ENCODE measurements at regions of chr5 and their contacts with region 1.

Region 1: GRCh38 chr5:119478781-119479180 is 26.5 kb downstream of the HSD17B4 start:
- DNase-seq: no peak
- H3K4me3 ChIP-seq: no peak overlapping the region
- H3K27ac ChIP-seq: no peak overlapping the region
- H3K4me1 ChIP-seq: peaks cover 0 to 4% (median 0%) of the 10 kb centered on the region in 4 donors
- H3K27me3 ChIP-seq: no peaks in the 10 kb centered on the region
- CTCF ChIP-seq: no peak
- EP300 ChIP-seq: no peak
- POLR2A ChIP-seq: no peak

Region 2: DNA sequence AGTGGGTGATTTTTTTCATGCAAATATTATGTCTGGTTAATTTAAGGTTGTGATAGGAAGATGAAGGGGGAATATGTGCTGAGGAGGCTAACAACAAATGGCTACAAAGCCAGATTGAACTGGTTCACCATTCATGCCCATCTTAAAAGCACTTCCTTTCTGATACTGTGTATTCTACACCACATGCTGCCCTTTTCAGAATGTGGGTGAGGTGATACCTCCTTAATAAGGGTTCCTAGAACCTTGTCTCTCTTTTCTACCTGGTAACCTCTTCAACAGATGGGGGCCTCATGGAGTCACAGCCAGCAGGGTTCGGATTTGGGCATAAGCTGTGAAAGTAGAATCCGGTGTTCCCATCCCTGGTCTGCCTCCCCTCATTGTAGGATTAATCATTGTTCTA is 1840.2 kb before region 1 on chr5:
- in situ Hi-C with region 1: no loop called
- intact Hi-C with region 1: no loop called
- DNase-seq: no peak
- H3K4me3 ChIP-seq: no peak overlapping the region
- H3K27ac ChIP-seq: no peak overlapping the region
- H3K4me1 ChIP-seq: no peaks in the 10 kb centered on the region
- H3K27me3 ChIP-seq: no peaks in the 10 kb centered on the region
- CTCF ChIP-seq: no peak
- EP300 ChIP-seq: no peak
- POLR2A ChIP-seq: no peak

Region 3: DNA sequence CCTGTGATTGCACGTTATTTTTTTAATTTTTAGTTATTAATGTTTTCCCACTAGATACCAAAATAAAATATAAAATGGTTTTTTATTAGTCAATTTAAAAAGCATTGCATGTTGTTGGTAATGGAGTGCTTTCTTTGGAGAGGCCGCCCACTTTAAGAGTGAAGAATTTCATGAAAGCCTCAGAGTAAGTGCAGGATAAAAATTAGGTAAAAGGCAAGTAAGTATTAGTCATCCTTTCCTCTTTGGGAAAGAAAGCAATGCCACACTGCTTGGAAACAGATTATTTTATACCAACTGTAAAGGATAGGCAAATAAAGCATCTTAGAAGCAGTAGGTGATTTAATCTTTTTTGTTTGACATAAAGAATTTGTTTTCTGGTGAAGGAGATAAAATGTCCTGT is 36.4 kb after region 1 on chr5:
- in situ Hi-C with region 1: no loop called
- intact Hi-C with region 1: no loop called
- DNase-seq: no peak
- H3K4me3 ChIP-seq: no peak overlapping the region
- H3K27ac ChIP-seq: no peak overlapping the region
- H3K4me1 ChIP-seq: no peaks in the 10 kb centered on the region
- H3K27me3 ChIP-seq: no peaks in the 10 kb centered on the region
- CTCF ChIP-seq: no peak
- EP300 ChIP-seq: no peak
- POLR2A ChIP-seq: no peak

Region 4: DNA sequence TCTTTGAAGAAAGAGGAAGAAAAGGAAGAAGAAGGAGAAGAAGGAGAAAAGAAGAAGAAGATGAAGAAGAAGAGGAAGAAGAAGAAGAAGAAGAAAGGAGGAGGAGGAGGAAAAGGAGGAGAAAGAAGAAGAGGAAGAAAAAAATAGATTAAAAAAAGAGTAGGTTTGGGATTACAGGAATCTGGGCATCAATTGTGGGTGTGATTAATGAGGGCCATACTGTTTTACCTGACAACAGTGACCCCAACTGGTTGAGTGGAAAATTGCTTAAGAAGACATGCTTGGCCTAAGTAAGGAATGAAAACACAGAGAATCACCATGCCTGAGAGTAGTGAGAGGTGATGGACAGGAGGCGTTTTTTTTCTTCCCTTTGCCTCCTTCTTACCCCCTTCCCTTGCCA is 265.1 kb after region 1 on chr5:
- in situ Hi-C with region 1: loop called in 1 of 4 experiments (anchors 25 kb)
- intact Hi-C with region 1: no loop called
- DNase-seq: no peak
- H3K4me3 ChIP-seq: no peak overlapping the region
- H3K27ac ChIP-seq: no peak overlapping the region
- H3K4me1 ChIP-seq: no peaks in the 10 kb centered on the region
- H3K27me3 ChIP-seq: no peaks in the 10 kb centered on the region
- CTCF ChIP-seq: peak; percentile 15 to 43 (median 30)
- EP300 ChIP-seq: no peak
- POLR2A ChIP-seq: no peak